Right cardiac atrium (tissue), 5 donors: ENCODE measurements at regions of chr5 and their contacts with region 1.

Region 1: GRCh38 chr5:98905857-98906690 is 22.7 kb downstream of the CHD1 start:
- DNase-seq: no peak
- ATAC-seq: no peak
- H3K4me3 ChIP-seq: no peak overlapping the region
- H3K27ac ChIP-seq: no peak overlapping the region
- H3K4me1 ChIP-seq: no peaks in the 10 kb centered on the region
- H3K27me3 ChIP-seq: no peaks in the 10 kb centered on the region

Region 2: GRCh38 chr5:98492258-98492657 is 413.8 kb before region 1 on chr5:
- intact Hi-C with region 1: no loop called
- DNase-seq: no peak
- ATAC-seq: no peak
- H3K4me3 ChIP-seq: no peak overlapping the region
- H3K27ac ChIP-seq: no peak overlapping the region
- H3K4me1 ChIP-seq: no peaks in the 10 kb centered on the region
- H3K27me3 ChIP-seq: no peaks in the 10 kb centered on the region

Region 3: DNA sequence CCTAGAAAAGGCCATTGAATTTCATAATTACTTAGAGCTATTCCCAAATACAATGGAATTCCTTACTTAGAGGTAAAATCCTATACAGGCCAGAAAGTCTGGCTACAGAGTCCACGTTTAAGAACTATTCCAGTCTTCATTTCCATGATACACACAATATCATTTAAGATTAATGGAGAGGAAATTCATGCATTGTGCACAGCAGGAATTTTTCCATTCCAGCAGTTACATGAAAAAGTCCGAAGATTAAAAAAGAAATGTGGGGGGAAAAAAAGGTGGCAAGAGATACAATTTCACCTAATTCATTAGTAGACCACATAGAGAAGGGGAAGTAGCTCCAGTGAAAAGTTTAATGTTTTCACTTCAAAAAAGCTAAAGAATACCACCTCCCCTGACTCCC is 40.4 kb before region 1 on chr5:
- intact Hi-C with region 1: loop called in 1 of 4 experiments (anchors 2 kb)
- DNase-seq: no peak
- ATAC-seq: no peak
- H3K4me3 ChIP-seq: no peak overlapping the region
- H3K27ac ChIP-seq: no peak overlapping the region
- H3K4me1 ChIP-seq: no peaks in the 10 kb centered on the region
- H3K27me3 ChIP-seq: no peaks in the 10 kb centered on the region

Region 4: GRCh38 chr5:99032234-99033013 is 126.3 kb after region 1 on chr5:
- intact Hi-C with region 1: loop called (anchors 1 to 5 kb)
- DNase-seq: peak; percentile 47 to 73 (median 62)
- ATAC-seq: peak; percentile 91
- H3K4me3 ChIP-seq: peak overlapping the region; percentile 73
- H3K27ac ChIP-seq: peak overlapping the region; percentile 34
- H3K4me1 ChIP-seq: no peaks in the 10 kb centered on the region
- H3K27me3 ChIP-seq: no peaks in the 10 kb centered on the region

Region 5: GRCh38 chr5:99059685-99060084 is 153.6 kb after region 1 on chr5:
- intact Hi-C with region 1: loop called in 1 of 4 experiments (anchors 5 kb)
- DNase-seq: no peak
- ATAC-seq: no peak
- H3K4me3 ChIP-seq: no peak overlapping the region
- H3K27ac ChIP-seq: no peak overlapping the region
- H3K4me1 ChIP-seq: no peaks in the 10 kb centered on the region
- H3K27me3 ChIP-seq: no peaks in the 10 kb centered on the region